Activated CD4-positive, alpha-beta T cell treated with anti-CD3 and anti-CD28 coated beads, Interleukin-2, amount 10 ng/mL, durations not matched to agents 7 days and 5 days (primary cell): ENCODE measurements at regions of chr19 and their contacts with region 1.

Region 1: DNA sequence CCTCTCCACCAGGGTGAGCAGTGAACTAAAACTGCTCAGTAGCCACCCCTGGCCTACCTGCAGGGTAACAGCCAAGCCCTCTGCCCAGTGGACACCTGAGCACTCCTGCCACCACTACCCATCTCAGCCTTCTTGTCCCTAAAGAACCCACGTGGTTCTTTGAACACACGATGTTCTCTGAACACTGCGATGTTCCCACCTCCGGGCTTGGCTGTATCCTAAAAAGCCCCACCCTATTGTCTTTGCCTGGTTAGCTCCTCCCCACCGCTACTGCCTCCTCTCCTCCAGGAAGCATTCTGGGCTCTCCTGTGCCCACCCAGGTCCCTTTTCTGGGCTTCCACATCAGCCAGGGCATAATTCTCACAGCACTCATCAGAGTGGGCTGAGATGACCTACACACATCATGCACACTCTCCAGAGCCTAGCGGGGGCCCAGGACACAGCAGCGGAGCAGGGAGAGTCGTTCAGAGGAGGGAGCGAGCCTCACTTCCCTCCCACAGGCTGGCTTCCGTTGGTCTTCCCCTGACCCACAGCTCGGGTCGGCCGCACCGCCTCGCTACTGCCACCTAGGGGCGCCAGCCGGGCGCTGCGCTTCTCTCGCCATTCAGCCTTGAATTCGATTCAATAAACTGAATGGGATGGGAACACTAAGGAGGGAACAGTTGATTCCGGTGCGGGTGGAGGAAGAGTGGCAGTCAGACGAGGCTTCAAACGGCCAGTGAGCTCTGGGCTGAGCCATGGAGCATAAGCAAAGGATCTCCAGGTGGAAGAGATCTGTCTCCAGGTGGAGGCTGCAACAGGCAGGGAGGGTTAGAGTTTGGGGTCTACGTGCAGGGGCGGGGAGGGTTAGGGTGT is 3.2 kb downstream of the ELAVL1 start:
- DNase-seq: peak; percentile 74
- H3K4me3 Mint-ChIP-seq: peak overlapping the region; percentile 59
- H3K27ac Mint-ChIP-seq: peak overlapping the region; percentile 69
- H3K4me1 Mint-ChIP-seq: peaks cover 50% of the 10 kb centered on the region
- H3K27me3 Mint-ChIP-seq: no peaks in the 10 kb centered on the region

Region 2: GRCh38 chr19:7970716-7971448 is 31.3 kb before region 1 on chr19:
- CTCF ChIA-PET with region 1: interaction called, 10 read pairs
- POLR2A ChIA-PET with region 1: no interaction called
- DNase-seq: peak; percentile 44
- H3K4me3 Mint-ChIP-seq: no peak overlapping the region
- H3K27ac Mint-ChIP-seq: peak overlapping the region; percentile 50
- H3K4me1 Mint-ChIP-seq: peaks cover 3% of the 10 kb centered on the region
- H3K27me3 Mint-ChIP-seq: no peaks in the 10 kb centered on the region

Region 3: DNA sequence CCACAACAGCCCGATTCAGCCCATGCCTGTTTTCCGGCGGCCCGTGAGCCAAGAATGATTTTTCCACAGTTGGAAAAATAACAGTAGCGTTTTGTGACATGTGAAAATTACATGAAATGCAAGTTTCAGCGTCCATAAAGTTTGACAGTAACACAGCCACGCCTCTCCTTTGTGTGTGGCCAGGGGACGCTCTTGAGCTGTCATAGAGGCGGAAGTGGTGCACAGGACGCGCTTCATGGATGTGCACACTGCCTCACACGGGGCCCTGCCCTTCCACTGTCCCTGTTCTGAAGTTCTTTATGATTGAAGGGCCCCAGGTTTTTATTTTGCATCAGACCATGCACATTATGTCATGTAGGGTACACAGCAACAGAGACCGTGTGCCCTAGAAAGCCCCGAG is 15.6 kb after region 1 on chr19:
- CTCF ChIA-PET with region 1: interaction called, 8 read pairs
- POLR2A ChIA-PET with region 1: interaction called, 14 read pairs
- DNase-seq: peak; percentile 62
- H3K4me3 Mint-ChIP-seq: no peak overlapping the region
- H3K27ac Mint-ChIP-seq: peak overlapping the region; percentile 72
- H3K4me1 Mint-ChIP-seq: peaks cover 9% of the 10 kb centered on the region
- H3K27me3 Mint-ChIP-seq: no peaks in the 10 kb centered on the region

Region 4: DNA sequence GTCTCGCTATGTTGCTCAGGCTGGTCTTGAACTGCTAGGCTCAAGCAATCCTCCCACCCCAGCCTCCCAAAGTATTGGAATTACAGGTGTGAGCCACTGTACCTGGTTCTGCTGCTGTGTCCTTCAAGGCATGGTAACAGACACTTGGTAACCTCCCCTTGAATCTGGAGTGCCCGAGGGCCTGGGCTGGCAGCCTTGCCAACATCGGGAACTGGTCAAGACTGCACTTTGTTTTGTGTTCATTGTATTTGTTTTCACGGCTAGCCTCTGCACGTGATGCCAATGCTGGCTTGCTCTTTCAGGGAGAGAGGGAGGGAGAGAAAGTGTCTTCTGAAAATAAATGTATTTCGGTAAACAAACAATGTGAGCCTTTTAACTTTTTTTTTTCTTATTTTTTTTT is 218.9 kb after region 1 on chr19:
- CTCF ChIA-PET with region 1: no interaction called
- POLR2A ChIA-PET with region 1: no interaction called
- DNase-seq: no peak
- H3K4me3 Mint-ChIP-seq: no peak overlapping the region
- H3K27ac Mint-ChIP-seq: no peak overlapping the region
- H3K4me1 Mint-ChIP-seq: peaks cover 4% of the 10 kb centered on the region
- H3K27me3 Mint-ChIP-seq: no peaks in the 10 kb centered on the region